ENCODE measurements at regions of chr1 and their contacts with region 1.

Region 1: GRCh38 chr1:66929999-66930822 is 5.4 kb downstream of the MIER1 start:
- DNase-seq: peak; percentile 72 to 97
- H3K4me3 ChIP-seq: peak overlapping the region; percentile 95
- H3K27ac ChIP-seq: peak overlapping the region; percentile 70
- H3K4me1 ChIP-seq: peaks cover 47% of the 10 kb centered on the region
- H3K27me3 ChIP-seq: no peaks in the 10 kb centered on the region
- CTCF ChIP-seq: no peak; the same call in 1 of the 2 replicates

Region 2: GRCh38 chr1:66944330-66945274 is 14.4 kb after region 1 on chr1:
- CTCF ChIA-PET with region 1: no interaction called
- POLR2A ChIA-PET with region 1: interaction called, 9 read pairs
- intact Hi-C with region 1: loop called (anchors 2 kb)
- DNase-seq: peak; percentile 65 to 66
- H3K4me3 ChIP-seq: no peak overlapping the region
- H3K27ac ChIP-seq: peak overlapping the region; percentile 76
- H3K4me1 ChIP-seq: peaks cover 13% of the 10 kb centered on the region
- H3K27me3 ChIP-seq: no peaks in the 10 kb centered on the region
- CTCF ChIP-seq: no peak

Region 3: GRCh38 chr1:67031121-67031858 is 101.1 kb after region 1 on chr1:
- CTCF ChIA-PET with region 1: no interaction called
- POLR2A ChIA-PET with region 1: no interaction called
- intact Hi-C with region 1: no loop called
- DNase-seq: no peak
- H3K4me3 ChIP-seq: no peak overlapping the region
- H3K27ac ChIP-seq: no peak overlapping the region
- H3K4me1 ChIP-seq: no peaks in the 10 kb centered on the region
- H3K27me3 ChIP-seq: no peaks in the 10 kb centered on the region
- CTCF ChIP-seq: no peak